GM12878 (cell line): ENCODE measurements at regions of chr11 and their contacts with region 1.

Region 1: DNA sequence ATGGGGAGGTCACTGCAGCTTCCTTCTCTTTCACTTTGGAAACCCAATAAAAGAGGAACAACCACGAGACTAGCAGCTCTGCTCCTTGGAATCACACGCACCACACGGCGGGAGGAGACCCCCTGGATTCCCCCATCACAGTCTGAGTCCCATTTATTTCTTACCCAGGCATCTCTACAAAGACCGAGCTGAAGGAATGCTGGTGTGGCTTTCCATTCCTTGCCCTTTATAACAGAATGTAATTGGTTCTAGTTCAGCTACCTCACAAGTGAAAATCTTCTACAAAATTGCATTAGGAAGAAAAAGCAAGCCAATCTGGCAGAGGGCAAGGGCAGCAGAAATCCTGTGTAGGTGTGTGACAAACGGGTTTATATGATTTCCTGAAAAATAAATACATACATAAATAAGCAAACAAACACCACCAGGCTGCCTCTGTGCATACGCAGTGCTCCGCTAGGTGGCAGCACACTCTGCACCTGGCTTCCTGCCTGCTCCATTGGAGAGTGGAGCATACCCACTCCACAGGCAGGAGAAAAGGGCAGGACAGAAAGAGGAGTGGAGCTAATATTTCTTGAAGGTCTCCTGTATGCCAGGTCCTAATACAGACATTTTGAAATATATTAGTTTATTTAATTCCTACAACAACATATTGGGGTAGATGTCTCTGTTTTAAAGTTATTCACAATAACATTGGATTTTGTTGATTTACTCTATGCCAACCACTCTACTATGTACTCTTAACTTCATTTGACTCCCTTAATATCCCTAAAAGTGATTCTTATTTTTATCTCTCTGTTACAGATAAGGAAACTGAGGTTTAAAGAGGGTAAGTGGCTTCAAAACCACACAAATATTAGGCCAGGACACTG is 673.1 kb downstream of the KCNA4 start:
- DNase-seq: no peak
- ATAC-seq: peak; percentile 98
- H3K4me3 ChIP-seq: no peak overlapping the region
- H3K27ac ChIP-seq: no peak overlapping the region
- H3K4me1 ChIP-seq: no peaks in the 10 kb centered on the region
- H3K27me3 ChIP-seq: no peaks in the 10 kb centered on the region
- CTCF ChIP-seq: peak; percentile 88 to 98 (median 97)
- EP300 ChIP-seq: no peak
- POLR2A ChIP-seq: no peak
- RAD21 ChIP-seq: peak; percentile 61

Region 2: DNA sequence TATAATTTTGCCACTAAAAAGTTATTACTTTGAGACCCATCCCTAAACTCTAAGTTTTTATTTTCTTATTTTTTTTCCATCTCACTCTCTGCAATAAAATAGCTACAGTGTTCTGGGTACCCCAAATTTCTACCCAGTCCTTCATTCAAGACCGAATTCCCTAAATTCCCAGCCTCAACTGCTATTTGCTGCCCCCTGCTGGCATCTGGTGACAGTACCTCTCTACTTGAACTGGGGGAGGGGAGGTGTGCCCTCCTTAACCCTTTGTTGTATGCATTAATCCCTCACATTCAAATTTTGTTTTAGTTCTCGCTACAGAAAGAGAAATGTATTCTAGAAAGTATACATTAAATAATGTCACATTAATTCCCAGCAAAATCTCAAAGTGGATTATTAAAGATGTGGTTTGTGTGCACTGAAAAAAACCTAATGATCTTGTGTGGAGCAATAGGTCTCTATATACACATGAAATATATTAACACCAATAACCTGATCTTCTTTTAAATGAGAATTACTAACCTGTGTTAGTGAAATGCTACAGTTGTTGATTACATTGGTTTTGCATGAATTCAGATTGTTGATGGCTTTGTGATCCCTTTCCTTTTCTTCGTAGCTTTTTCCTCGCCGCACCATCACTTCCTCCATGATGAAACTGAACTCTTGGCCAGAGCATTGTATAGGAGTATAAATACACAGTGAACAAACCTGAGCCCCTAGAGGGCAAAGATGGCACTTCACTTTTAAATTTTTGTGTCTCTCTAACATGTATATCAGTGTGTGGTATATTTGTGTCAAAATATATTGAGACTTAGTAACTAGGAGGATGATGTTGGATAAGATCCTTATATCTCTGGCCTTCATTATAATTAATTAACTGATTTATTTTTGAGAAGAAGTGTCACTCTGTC is 645.5 kb before region 1 on chr11:
- CTCF ChIA-PET with region 1: no interaction called
- POLR2A ChIA-PET with region 1: no interaction called
- RAD21 ChIA-PET with region 1: no interaction called
- SMC1A ChIA-PET with region 1: no interaction called
- in situ Hi-C with region 1: loop called (anchors 25 kb)
- intact Hi-C with region 1: no loop called
- DNase-seq: no peak
- ATAC-seq: peak; percentile 80
- H3K4me3 ChIP-seq: no peak overlapping the region
- H3K27ac ChIP-seq: no peak overlapping the region
- H3K4me1 ChIP-seq: no peaks in the 10 kb centered on the region
- H3K27me3 ChIP-seq: no peaks in the 10 kb centered on the region
- CTCF ChIP-seq: peak; percentile 78 to 85 (median 82)
- EP300 ChIP-seq: no peak
- POLR2A ChIP-seq: no peak
- RAD21 ChIP-seq: peak; percentile 72